ENCODE measurements at regions of chr22 and their contacts with region 1.

Region 1: DNA sequence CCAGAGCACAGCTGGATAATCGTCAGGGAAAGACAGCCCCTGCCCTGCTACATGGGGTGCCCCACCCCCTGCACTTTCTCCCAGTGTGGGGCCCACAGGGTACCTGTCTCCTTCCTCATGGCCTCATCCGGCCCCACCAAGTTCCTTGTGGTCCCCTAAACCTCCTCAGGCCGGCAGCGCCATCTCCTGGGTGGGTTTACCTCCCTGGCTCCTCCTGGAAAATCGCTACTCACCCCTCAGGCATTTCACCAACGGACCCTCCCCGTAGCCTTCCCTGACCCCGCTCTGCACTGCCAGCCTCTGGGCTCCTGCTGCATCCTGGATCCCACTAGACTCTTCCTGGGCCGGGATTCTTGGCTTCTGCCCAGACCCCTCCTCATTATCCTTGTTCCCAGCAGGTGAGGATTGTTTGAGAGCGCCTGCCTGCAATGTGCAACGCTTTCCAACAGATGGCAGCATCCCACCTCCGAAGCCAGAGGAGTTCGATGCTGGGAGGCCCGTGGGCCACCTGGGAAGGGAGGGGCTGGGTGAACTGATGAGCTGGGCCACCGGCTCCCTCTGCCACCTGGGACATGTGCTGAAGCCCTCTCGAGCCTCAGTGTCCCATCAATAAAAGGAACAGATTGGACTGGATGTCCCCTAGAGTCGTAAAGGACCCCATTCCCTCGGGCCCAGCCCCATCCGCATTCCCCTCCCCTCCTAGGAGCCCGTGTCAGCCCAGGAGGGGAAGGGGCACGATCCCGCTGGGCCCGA is 44.2 kb upstream of the TTLL12 start:
- DNase-seq: peak; percentile 89
- ATAC-seq: peak; percentile 54
- H3K4me3 Mint-ChIP-seq: peak overlapping the region; percentile 45
- H3K27ac Mint-ChIP-seq: peak overlapping the region; percentile 79
- H3K4me1 Mint-ChIP-seq: peaks cover 19% of the 10 kb centered on the region
- H3K27me3 Mint-ChIP-seq: no peaks in the 10 kb centered on the region; the same call in 1 of the 2 replicates
- CTCF ChIP-seq: peak; percentile 97

Region 2: DNA sequence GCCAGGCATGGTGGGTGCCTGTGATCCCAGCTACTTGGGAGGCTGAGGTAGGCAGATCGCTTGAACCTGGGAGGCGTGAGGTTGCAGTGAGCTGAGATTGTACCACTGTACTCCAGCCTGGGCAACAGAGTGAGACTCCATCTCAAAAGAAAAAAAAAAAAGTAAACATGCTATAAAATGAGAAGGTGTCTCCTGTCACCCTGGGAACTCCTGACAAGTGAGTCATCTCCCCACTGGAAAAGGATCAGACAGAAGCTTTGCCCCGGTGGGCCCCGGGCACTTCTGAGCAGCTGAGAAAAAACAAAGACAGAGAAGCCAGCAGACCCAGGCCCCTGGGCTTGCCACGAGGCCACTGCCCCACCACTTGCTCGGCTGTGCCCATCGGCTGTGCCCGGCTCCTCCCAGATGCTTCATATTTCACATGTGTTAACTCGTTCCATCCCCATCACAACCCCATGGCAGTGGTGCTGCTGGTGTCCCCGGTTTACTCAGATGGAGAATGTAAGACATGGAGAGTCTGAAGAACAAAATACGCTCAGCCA is 164.2 kb before region 1 on chr22:
- CTCF ChIA-PET with region 1: no interaction called
- POLR2A ChIA-PET with region 1: no interaction called
- DNase-seq: no peak
- ATAC-seq: no peak
- H3K4me3 Mint-ChIP-seq: no peak overlapping the region
- H3K27ac Mint-ChIP-seq: no peak overlapping the region
- H3K4me1 Mint-ChIP-seq: no peaks in the 10 kb centered on the region
- H3K27me3 Mint-ChIP-seq: no peaks in the 10 kb centered on the region
- CTCF ChIP-seq: no peak

Region 3: DNA sequence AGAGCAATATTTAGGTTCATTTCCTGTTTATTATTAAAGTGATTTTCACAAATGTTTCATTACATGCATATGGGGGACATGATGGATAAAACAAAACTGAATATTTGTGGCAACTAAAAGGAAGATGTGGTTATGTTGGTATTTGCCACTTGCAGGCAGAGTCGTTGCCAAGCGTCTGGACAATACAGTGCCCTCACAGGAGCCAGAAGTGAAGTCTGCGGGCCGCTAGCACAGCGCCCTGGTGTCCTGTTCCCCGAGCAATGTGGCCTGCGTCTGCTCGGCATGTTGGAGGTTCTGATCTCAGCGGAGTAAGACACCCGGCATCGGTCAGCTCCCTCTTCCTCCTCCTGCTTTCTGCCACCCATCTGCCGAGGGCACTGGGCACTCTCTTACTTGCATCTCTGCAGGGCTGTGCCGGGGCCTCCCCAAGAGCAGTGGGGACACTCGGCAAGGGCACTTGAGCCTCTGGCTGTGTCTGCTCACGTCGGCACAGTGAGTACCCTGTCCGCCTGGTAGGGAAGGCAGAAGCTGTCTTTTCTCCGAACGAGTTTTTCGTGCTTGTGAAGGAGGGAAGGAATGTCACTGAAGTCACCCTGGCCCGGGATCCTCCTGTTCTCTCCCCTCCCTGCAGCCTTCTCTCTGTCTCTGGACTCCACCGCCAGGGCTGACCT is 33.7 kb before region 1 on chr22:
- CTCF ChIA-PET with region 1: interaction called, 35 read pairs
- POLR2A ChIA-PET with region 1: no interaction called
- DNase-seq: no peak
- ATAC-seq: no peak
- H3K4me3 Mint-ChIP-seq: no peak overlapping the region
- H3K27ac Mint-ChIP-seq: no peak overlapping the region
- H3K4me1 Mint-ChIP-seq: no peaks in the 10 kb centered on the region
- H3K27me3 Mint-ChIP-seq: no peaks in the 10 kb centered on the region; the same call in 1 of the 2 replicates
- CTCF ChIP-seq: no peak

Region 4: GRCh38 chr22:43213051-43213450 is 18.1 kb before region 1 on chr22:
- CTCF ChIA-PET with region 1: interaction called, 41 read pairs
- POLR2A ChIA-PET with region 1: no interaction called
- DNase-seq: peak; percentile 60
- ATAC-seq: peak; percentile 92
- H3K4me3 Mint-ChIP-seq: no peak overlapping the region
- H3K27ac Mint-ChIP-seq: no peak overlapping the region
- H3K4me1 Mint-ChIP-seq: peaks cover 12% of the 10 kb centered on the region
- H3K27me3 Mint-ChIP-seq: no peaks in the 10 kb centered on the region
- CTCF ChIP-seq: no peak

Region 5: GRCh38 chr22:43263645-43264514 is 32.7 kb after region 1 on chr22:
- CTCF ChIA-PET with region 1: interaction called, 267 read pairs
- POLR2A ChIA-PET with region 1: no interaction called
- DNase-seq: no peak
- ATAC-seq: no peak
- H3K4me3 Mint-ChIP-seq: no peak overlapping the region
- H3K27ac Mint-ChIP-seq: peak overlapping the region; percentile 5; the same call in 1 of the 2 replicates
- H3K4me1 Mint-ChIP-seq: peaks cover 7% of the 10 kb centered on the region; the same call in 1 of the 2 replicates
- H3K27me3 Mint-ChIP-seq: no peaks in the 10 kb centered on the region
- CTCF ChIP-seq: no peak

Region 6: DNA sequence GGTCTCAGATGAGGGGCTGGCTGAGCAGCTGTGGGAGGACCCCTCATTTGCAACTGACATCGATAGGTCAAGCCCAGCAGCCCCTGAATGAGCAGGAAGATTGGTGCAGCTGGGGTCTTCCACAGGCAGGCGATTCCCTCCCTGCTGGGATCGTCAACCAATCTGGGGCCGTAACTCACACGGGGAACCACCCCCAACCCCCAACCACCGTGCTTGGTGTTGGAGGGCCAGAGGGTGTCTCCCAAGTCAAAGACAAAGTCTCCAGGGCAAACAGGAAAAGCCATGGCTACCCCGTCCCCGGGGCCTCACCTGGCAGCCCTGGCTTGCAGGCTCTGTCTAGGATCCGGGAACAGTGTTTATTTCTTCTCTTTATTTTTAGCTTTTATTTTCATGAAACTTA is 138.9 kb after region 1 on chr22:
- CTCF ChIA-PET with region 1: interaction called, 10 read pairs
- POLR2A ChIA-PET with region 1: no interaction called
- DNase-seq: peak; percentile 62
- ATAC-seq: peak; percentile 96
- H3K4me3 Mint-ChIP-seq: peak overlapping the region; percentile 24; the same call in 1 of the 2 replicates
- H3K27ac Mint-ChIP-seq: no peak overlapping the region
- H3K4me1 Mint-ChIP-seq: peaks cover 12% of the 10 kb centered on the region
- H3K27me3 Mint-ChIP-seq: peaks cover 3% of the 10 kb centered on the region; the same call in 1 of the 2 replicates
- CTCF ChIP-seq: no peak

Region 7: DNA sequence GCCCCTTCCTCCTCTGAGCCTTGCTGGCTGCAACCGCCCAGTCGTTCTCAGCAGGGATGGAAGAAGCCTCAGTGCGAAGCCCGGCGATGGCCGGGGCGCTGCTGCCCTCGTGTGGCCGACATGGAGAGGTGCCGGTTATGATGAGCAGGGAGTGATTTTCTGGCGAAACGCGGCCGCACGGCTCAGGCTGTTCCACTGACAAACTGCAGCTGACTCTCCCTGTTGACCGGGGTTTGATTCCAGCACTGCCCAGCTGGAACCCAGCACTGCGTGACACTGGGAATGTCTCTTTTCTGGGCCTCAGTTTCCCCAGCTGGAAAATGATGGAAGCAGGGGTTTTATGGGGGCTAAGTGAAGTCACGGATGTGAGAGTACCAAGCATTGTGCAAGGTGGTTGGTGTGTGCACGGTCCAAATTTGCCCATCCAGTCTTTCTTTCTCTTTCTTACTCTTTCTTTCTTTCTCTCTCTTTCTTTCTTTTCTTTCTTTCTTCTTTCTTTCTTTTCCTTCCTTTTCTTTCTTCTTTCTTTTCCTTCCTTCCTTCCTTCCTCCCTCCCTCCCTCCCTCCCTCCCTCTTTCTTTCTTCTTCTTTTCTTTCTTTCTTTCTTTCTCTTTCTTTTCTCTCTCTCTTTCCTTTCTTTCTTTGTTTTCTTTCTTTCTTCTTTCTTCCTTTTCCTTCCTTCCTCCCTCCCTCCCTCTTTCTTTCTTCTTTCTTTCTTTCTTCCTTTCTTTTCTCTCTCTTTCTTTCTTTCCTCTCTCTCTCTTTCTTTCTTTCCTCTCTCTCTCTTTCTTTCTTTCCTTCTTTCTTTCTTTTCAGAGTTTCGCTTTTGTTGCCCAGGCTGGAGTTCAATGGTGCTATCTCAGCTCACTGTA is 154.9 kb after region 1 on chr22:
- CTCF ChIA-PET with region 1: interaction called, 79 read pairs
- POLR2A ChIA-PET with region 1: interaction called, 3 read pairs
- DNase-seq: peak; percentile 84
- ATAC-seq: peak; percentile 73
- H3K4me3 Mint-ChIP-seq: no peak overlapping the region
- H3K27ac Mint-ChIP-seq: no peak overlapping the region
- H3K4me1 Mint-ChIP-seq: peaks cover 14% of the 10 kb centered on the region
- H3K27me3 Mint-ChIP-seq: peaks cover 28% of the 10 kb centered on the region
- CTCF ChIP-seq: peak; percentile 86